ENCODE measurements at regions of chr13 and their contacts with region 1.

Region 1: GRCh38 chr13:80379245-80379644 is 38.3 kb upstream of the SPRY2 start:
- DNase-seq: peak; percentile 85
- ATAC-seq: peak; percentile 76
- H3K4me3 ChIP-seq: no peak overlapping the region
- H3K27ac ChIP-seq: no peak overlapping the region
- H3K4me1 ChIP-seq: peaks cover 4% of the 10 kb centered on the region; the same call in 1 of the 2 replicates
- H3K27me3 ChIP-seq: no peaks in the 10 kb centered on the region
- CTCF ChIP-seq: no peak

Region 2: GRCh38 chr13:80274643-80275042 is 104.6 kb before region 1 on chr13:
- CTCF ChIA-PET with region 1: no interaction called
- POLR2A ChIA-PET with region 1: no interaction called
- intact Hi-C with region 1: no loop called
- DNase-seq: peak; percentile 43
- ATAC-seq: peak; percentile 76
- H3K4me3 ChIP-seq: no peak overlapping the region
- H3K27ac ChIP-seq: no peak overlapping the region
- H3K4me1 ChIP-seq: no peaks in the 10 kb centered on the region
- H3K27me3 ChIP-seq: no peaks in the 10 kb centered on the region
- CTCF ChIP-seq: no peak

Region 3: GRCh38 chr13:80363890-80364503 is 15.2 kb before region 1 on chr13:
- CTCF ChIA-PET with region 1: no interaction called
- POLR2A ChIA-PET with region 1: no interaction called
- intact Hi-C with region 1: no loop called
- DNase-seq: peak; percentile 49
- ATAC-seq: no peak
- H3K4me3 ChIP-seq: 0 out of 2 replicates have a peak overlapping the region, but pooled peaks have one; percentile 23
- H3K27ac ChIP-seq: no peak overlapping the region
- H3K4me1 ChIP-seq: peaks cover 7% of the 10 kb centered on the region; the same call in 1 of the 2 replicates
- H3K27me3 ChIP-seq: no peaks in the 10 kb centered on the region
- CTCF ChIP-seq: peak; percentile 80

Region 4: DNA sequence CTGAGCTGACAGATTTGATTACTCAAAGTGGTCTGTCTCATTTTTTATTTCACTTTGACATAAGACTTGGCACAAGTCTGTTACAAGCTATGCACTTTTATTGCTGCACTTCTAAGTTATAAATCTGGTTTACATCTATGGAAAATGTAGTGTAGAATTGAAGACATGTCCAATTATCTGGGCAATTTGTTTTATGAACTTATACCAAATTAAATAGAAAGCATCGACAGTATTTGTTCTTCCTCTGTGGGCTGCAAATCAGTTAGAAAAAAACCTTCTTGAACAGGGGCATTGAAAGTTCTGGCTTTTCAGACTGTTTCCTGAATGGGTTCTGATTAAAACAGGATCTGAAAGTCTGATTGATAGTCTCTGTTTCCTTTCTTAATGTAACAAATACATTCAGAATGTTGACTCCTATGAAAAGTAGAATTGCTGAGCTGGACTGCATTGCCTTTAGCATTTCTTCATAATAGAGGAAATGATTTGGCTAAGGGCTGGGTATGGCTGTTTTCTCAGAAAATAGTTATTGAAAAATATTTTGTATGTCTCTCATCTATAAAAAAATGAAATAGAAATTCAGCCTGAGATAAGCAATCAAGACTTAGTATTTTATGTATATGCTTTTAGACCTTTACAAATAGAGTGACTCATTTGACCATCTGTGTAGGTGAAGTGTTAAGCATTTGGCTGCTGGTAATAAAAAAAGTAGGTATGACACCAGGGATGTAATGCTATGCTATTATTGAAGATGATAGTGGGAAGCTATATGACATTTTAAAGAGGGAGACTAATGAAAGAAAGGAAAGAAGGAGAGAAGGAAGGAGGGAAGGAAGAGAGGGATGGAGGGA is 172.6 kb after region 1 on chr13:
- CTCF ChIA-PET with region 1: no interaction called
- POLR2A ChIA-PET with region 1: interaction called, 6 read pairs
- intact Hi-C with region 1: loop called (anchors 5 kb)
- DNase-seq: peak; percentile 44
- ATAC-seq: peak; percentile 78
- H3K4me3 ChIP-seq: no peak overlapping the region; the same call in 1 of the 2 replicates
- H3K27ac ChIP-seq: peak overlapping the region; percentile 45
- H3K4me1 ChIP-seq: peaks cover 22% of the 10 kb centered on the region
- H3K27me3 ChIP-seq: no peaks in the 10 kb centered on the region
- CTCF ChIP-seq: no peak